CD4-positive, alpha-beta memory T cell (primary cell): ENCODE measurements at regions of chr16 and their contacts with region 1.

Region 1: DNA sequence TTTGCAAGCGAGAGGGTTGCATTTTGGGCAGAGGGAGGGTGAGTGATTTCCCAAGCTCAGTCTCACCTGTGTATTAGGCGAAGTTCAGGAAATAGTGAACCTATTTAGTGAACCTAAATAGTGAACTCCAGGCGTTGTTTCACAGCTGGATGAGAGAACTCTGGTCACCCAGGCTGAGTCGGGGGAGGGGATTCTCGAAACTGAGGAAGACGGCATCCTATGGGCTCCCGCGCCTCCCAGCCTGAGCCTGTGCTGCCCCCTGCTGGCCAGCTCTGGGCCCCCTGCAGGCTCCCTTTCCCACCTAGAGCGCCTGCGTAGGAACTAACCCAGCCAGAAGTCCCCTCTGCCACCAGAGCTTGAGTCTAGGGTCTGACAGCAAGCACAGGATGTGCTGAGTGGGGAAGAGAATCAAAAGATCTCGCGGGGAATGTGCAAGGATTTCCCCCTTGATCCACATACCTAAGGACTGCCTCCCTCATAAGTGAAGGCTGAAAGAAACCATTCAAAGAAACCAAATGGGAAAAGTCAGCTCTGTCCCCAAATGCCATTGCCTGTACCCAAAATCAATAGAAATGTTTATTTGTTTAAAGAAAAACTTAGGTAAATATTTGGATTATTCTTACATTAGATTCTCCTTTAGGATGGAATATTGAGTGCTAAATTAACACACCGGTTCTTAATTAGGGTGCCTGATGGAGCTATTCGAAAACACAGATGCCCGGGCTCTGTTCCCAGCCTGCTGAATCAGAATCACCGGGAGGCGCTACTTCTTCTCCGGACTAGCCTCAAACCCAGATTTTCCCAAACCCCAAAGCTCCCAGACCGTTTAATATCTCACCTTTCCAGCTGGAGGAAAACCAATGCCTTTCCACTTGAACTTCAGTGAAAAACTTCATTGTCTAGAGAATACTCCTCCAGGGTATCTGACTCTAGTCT is 14.8 kb upstream of the MARVELD3 start:
- DNase-seq: peak; percentile 63 to 67 (median 66)
- H3K4me3 ChIP-seq: no peak overlapping the region
- H3K4me3 Mint-ChIP-seq: peak overlapping the region in 2 of 8 donors; percentile 13 to 25
- H3K27ac ChIP-seq: no peak overlapping the region
- H3K27ac Mint-ChIP-seq: no peak overlapping the region
- H3K4me1 ChIP-seq: no peaks in the 10 kb centered on the region
- H3K4me1 Mint-ChIP-seq: peaks cover 0 to 4% (median 2%) of the 10 kb centered on the region in 4 donors
- H3K27me3 ChIP-seq: no peaks in the 10 kb centered on the region
- H3K27me3 Mint-ChIP-seq: peaks cover 2 to 25% of the 10 kb centered on the region in 2 donors

Region 2: DNA sequence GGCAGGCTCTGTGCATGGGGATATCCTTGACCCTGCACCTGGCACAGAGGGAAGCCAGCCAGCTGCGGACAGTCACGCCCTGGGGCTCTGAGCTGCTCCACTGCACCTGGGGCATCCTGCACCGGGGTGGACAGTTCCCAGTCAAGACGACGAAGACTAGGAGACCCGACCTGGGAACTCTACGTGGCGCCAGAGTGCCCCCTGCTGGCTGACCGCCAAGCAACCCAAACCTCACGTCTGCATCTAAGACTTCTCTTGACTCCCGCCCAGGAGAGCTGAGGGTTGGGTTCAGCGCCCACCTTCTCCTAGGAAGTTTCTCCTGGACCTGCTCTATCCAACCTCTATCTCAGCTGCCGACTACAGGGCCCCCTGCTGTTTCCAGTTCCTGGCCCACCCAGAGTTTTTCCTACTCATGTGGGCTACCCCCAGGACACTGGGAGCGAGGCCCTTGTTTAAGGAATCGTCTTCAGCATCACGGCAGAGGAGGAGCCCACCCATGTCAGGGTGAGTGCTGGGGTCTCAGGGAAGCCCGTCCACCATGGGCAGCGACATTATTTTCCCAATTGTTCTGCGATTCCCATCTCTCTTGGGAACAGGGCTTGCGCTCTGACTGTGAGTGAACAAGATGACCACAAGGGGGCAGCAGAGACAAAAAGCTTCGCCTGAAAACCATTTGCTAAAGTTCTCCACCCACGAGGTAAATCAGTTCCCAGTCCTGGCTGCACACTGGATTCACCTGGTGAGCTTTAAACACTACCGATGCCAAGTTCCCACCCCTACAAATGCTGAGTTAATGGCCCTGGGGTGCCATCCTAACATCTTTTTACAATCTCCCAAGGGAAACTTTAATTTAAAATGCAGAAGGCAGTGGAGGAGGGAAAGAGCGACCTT is 198.7 kb before region 1 on chr16:
- CTCF ChIA-PET with region 1: interaction called, 57 read pairs
- POLR2A ChIA-PET with region 1: no interaction called
- intact Hi-C with region 1: no loop called
- DNase-seq: peak; percentile 49 to 63 (median 56)
- H3K4me3 ChIP-seq: no peak overlapping the region
- H3K4me3 Mint-ChIP-seq: peak overlapping the region in 1 of 8 donors; percentile 20
- H3K27ac ChIP-seq: no peak overlapping the region
- H3K27ac Mint-ChIP-seq: no peak overlapping the region
- H3K4me1 ChIP-seq: peaks cover 11% of the 10 kb centered on the region
- H3K4me1 Mint-ChIP-seq: peaks cover 6 to 19% (median 9%) of the 10 kb centered on the region in 4 donors
- H3K27me3 ChIP-seq: no peaks in the 10 kb centered on the region
- H3K27me3 Mint-ChIP-seq: peaks cover 30 to 38% of the 10 kb centered on the region in 2 donors

Region 3: GRCh38 chr16:71537643-71538042 is 73.6 kb before region 1 on chr16:
- CTCF ChIA-PET with region 1: interaction called, 13 read pairs
- POLR2A ChIA-PET with region 1: no interaction called
- intact Hi-C with region 1: no loop called
- DNase-seq: peak in 4 of 5 donors; percentile 3 to 19 (median 8)
- H3K4me3 ChIP-seq: no peak overlapping the region
- H3K4me3 Mint-ChIP-seq: no peak overlapping the region
- H3K27ac ChIP-seq: no peak overlapping the region
- H3K27ac Mint-ChIP-seq: no peak overlapping the region
- H3K4me1 ChIP-seq: no peaks in the 10 kb centered on the region
- H3K4me1 Mint-ChIP-seq: peaks cover 0 to 4% (median 4%) of the 10 kb centered on the region in 4 donors
- H3K27me3 ChIP-seq: no peaks in the 10 kb centered on the region
- H3K27me3 Mint-ChIP-seq: peaks cover 4 to 6% of the 10 kb centered on the region in 2 donors

Region 4: DNA sequence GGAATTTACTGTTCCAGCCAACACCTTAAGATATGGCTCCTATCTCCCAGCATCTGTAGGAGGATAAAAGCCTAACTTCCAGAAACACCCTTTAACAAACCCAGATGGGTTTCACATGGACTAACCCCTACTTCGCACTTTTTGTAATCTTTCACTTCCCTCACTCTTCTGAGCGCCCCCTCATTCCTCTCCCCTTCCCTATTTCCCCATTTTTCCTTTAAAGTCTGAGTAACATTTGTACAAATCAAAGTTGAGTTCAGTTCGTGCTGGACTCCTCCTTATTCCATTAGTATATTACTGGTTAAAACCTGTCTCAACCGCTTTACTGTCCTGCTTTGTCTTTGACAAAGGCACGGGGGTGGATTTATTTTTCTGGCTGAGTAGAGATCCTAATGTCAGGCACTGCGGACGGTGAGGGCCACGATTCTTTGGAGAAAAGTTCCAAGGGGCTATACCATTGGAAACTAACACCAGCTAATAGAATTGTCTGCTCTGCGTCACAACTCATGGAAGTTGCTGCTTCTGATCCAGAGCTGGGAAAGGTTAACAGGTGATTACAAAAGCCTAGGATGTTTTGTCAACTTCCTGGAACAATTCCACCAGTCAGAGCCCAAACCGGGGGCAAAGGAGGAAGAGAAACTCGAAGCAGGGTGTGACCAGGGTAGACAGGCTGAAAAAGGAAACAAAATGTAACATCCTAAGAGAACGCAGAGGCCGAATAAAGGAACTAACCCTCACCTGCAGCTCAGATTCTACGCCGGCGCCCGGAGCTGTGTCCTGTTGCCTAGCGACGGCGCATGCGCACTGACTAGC is 46.8 kb before region 1 on chr16:
- CTCF ChIA-PET with region 1: interaction called, 107 read pairs
- POLR2A ChIA-PET with region 1: interaction called, 13 read pairs
- intact Hi-C with region 1: loop called (anchors 1 kb)
- DNase-seq: no peak
- H3K4me3 ChIP-seq: peak overlapping the region; percentile 7 to 61
- H3K4me3 Mint-ChIP-seq: peak overlapping the region; percentile 89 to 96 (median 93)
- H3K27ac ChIP-seq: peak overlapping the region; percentile 69
- H3K27ac Mint-ChIP-seq: peak overlapping the region; percentile 90 to 99 (median 96)
- H3K4me1 ChIP-seq: peaks cover 12% of the 10 kb centered on the region
- H3K4me1 Mint-ChIP-seq: peaks cover 11 to 21% (median 17%) of the 10 kb centered on the region in 4 donors
- H3K27me3 ChIP-seq: no peaks in the 10 kb centered on the region
- H3K27me3 Mint-ChIP-seq: no peaks in the 10 kb centered on the region

Region 5: GRCh38 chr16:71622088-71622487 is 10.9 kb after region 1 on chr16:
- CTCF ChIA-PET with region 1: interaction called, 14 read pairs
- POLR2A ChIA-PET with region 1: no interaction called
- intact Hi-C with region 1: no loop called
- DNase-seq: peak in 3 of 5 donors; percentile 12 to 13 (median 12)
- H3K4me3 ChIP-seq: no peak overlapping the region
- H3K4me3 Mint-ChIP-seq: peak overlapping the region in 4 of 8 donors; percentile 3 to 59 (median 18)
- H3K27ac ChIP-seq: no peak overlapping the region
- H3K27ac Mint-ChIP-seq: peak overlapping the region in 2 of 7 donors; percentile 22 to 39
- H3K4me1 ChIP-seq: peaks cover 20% of the 10 kb centered on the region
- H3K4me1 Mint-ChIP-seq: peaks cover 8 to 20% (median 14%) of the 10 kb centered on the region in 4 donors
- H3K27me3 ChIP-seq: no peaks in the 10 kb centered on the region
- H3K27me3 Mint-ChIP-seq: peaks cover 6 to 7% of the 10 kb centered on the region in 2 donors

Region 6: DNA sequence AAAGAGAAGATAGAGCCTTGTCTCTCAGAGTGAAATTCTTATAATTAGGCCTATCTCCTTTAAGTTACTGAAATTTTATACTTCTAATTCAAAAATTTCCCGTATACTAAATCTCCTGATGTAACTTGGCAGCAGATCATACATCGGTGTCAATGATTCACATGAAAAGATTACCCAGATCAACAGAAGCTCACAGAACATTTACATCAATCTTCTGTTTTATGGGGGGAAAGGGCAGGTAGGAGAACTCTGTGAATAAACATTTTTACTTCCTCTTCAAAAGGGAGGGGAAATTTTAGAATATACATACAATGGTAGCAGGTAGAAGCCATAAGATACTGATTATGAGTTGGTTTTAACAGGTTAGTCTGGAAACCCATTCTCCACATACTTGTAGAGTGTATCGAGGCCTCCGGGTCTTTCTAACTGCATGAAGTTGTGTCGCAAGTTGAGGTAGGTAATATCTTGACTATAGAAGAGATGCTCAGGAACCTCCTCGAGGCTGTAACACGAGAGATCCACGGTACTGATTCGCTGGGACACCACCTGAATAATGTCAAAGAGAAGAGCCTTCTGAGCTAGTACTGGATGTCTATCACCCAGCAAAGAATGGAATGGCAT is 70.3 kb after region 1 on chr16:
- CTCF ChIA-PET with region 1: no interaction called
- POLR2A ChIA-PET with region 1: no interaction called
- intact Hi-C with region 1: no loop called
- DNase-seq: no peak
- H3K4me3 ChIP-seq: no peak overlapping the region
- H3K4me3 Mint-ChIP-seq: no peak overlapping the region
- H3K27ac ChIP-seq: no peak overlapping the region
- H3K27ac Mint-ChIP-seq: no peak overlapping the region
- H3K4me1 ChIP-seq: no peaks in the 10 kb centered on the region
- H3K4me1 Mint-ChIP-seq: no peaks in the 10 kb centered on the region
- H3K27me3 ChIP-seq: no peaks in the 10 kb centered on the region
- H3K27me3 Mint-ChIP-seq: no peaks in the 10 kb centered on the region

Region 7: DNA sequence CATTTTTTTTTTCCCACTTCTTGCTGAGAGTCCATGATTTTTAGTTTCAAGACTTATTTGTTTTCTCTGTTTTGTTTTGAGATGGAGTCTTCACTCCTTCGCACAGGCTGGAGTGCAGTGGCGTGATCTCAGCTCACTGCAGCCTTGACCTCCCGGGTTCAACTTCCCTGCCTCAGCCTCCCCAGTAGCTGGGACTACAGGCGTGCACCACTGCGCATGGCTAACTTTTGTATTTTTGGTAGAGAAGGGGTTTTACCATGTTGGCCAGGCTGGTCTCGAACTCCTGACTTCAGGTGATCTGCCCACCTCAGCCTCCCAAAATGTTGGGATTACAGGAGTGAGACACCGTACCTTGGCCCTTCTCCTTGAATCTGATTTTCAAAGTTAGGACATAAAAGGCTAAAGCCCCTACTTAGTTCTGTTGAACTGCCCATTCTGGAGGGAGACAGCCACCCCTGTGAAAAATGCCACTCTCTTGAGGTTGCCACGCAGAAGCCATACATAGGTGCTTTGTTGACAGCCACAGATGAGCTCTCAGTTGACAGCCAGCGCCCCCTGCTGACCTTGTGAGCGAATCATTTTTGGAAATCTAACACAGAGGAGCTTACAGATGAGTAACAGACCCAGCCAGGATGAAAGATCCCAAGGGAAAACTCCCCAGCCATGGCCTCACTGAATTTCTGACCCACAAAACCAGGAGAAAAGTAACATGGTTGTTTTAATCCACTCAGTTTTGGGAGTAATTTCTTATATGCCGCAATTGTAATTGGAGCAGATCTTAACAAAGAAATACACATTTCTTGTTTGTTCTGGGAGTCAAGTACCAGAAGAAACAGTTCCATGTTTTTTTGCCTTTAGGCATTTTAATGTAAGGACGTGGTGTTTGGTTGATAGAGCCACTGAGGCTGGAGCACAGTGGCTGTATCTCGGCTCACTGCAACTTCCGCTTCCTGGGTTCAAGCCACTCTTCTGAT is 350.1 kb after region 1 on chr16:
- CTCF ChIA-PET with region 1: interaction called, 11 read pairs
- POLR2A ChIA-PET with region 1: no interaction called
- intact Hi-C with region 1: loop called (anchors 1 kb)
- DNase-seq: peak; percentile 69 to 75 (median 70)
- H3K4me3 ChIP-seq: no peak overlapping the region
- H3K4me3 Mint-ChIP-seq: no peak overlapping the region
- H3K27ac ChIP-seq: no peak overlapping the region
- H3K27ac Mint-ChIP-seq: peak overlapping the region in 1 of 7 donors; percentile 43
- H3K4me1 ChIP-seq: peaks cover 5% of the 10 kb centered on the region
- H3K4me1 Mint-ChIP-seq: peaks cover 5 to 9% (median 6%) of the 10 kb centered on the region in 4 donors
- H3K27me3 ChIP-seq: no peaks in the 10 kb centered on the region
- H3K27me3 Mint-ChIP-seq: peaks cover 0 to 3% of the 10 kb centered on the region in 2 donors